Activated CD4-positive, alpha-beta T cell treated with anti-CD3 and anti-CD28 coated beads, Interleukin-2, amount 10 ng/mL, durations not matched to agents 24 days and 14 days (primary cell): ENCODE measurements at regions of chr2 and their contacts with region 1.

Region 1: DNA sequence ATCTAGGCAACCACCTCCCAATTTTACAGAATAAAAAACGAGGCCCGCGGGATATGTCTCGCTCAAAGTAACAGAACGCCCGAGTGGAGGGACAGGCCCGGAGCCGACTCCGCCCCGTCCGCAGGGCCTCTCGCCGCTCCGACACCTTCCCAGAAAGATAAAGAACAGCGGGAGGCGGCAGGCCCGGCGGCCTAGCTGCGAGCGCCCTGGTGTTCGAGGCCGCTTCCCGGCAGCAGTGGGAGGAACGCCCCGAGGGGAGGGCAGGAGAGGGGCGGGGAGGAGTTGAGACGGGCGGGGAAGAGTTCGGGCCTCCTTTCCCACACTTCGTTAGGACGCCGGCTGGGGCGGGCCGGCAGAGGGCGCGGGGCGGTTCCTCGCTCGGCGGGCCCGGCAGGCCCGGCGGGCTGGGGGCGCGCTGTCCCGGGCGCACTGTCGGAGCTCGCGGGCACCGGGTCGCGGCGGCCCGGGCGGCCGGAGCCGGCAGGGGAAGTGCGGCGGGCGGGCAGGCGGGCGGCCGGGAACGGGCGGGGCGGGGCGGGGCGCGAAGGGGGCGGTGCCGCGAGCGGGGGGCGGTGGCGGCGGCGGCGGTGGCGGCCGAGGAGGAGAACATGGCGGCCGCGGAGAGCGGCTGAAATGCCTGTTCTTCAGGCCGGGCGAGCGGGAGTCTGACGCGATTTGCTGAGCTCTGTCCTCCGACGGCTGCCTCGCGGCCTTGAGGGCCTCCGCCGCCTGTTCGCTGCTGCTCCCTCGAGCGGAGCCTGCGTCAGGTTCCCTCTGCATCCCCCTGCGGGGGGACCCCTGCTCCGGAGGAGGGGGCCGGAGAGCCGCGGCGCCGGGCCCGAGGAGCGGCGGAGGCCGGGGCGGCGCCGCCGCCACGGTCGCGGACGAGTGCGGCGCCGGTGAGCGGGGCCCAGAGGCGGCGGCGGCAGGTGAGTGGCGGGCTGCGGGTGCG is at the start of gene NCOA1:
- DNase-seq: peak; percentile 97
- H3K4me3 Mint-ChIP-seq: peak within 1 kb of the TSS; percentile 96
- H3K27ac Mint-ChIP-seq: peak within 1 kb of the TSS; percentile 92
- H3K4me1 Mint-ChIP-seq: peaks cover 40% of the 10 kb centered on the region
- H3K27me3 Mint-ChIP-seq: peaks cover 2% of the 10 kb centered on the region
- total RNA-seq, gene NCOA1: 24.6 and 25.9 TPM in 2 replicates

Region 2: DNA sequence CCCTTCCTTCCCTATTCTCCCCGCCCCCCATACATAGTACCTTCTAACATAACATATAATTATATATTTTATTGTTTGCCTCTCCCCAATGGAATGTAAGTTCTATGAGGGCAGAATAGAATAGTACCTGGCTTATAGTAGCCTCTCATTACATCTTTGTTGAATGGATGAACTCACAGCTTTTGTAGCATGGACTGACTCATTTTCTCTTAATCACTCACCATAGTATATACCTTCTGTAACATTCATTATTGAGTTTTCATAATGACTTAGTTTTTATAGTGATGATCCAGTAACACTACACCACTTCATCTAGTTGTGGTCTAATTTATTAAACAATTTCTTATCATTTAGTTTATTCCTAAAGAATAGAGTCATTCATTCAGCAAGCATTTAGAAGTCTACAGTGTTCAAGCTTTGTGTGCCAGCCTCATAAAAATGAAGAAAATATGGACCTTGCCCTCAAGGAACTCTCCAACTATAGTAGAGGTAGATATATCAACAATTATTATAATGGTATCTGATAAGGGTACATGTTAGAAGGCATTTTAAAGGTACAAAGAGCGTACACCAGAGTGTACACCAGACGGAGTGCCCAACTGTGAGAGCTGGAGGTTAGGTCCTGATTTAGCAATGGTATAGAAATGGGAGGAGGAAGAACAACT is 31.2 kb after region 1 on chr2:
- intact Hi-C with region 1: loop called (anchors 1 kb)
- DNase-seq: no peak
- H3K4me3 Mint-ChIP-seq: peak overlapping the region; percentile 74
- H3K27ac Mint-ChIP-seq: peak overlapping the region; percentile 87
- H3K4me1 Mint-ChIP-seq: peaks cover 30% of the 10 kb centered on the region
- H3K27me3 Mint-ChIP-seq: no peaks in the 10 kb centered on the region